ENCODE measurements at regions of chr5 and their contacts with region 1.

Region 1: DNA sequence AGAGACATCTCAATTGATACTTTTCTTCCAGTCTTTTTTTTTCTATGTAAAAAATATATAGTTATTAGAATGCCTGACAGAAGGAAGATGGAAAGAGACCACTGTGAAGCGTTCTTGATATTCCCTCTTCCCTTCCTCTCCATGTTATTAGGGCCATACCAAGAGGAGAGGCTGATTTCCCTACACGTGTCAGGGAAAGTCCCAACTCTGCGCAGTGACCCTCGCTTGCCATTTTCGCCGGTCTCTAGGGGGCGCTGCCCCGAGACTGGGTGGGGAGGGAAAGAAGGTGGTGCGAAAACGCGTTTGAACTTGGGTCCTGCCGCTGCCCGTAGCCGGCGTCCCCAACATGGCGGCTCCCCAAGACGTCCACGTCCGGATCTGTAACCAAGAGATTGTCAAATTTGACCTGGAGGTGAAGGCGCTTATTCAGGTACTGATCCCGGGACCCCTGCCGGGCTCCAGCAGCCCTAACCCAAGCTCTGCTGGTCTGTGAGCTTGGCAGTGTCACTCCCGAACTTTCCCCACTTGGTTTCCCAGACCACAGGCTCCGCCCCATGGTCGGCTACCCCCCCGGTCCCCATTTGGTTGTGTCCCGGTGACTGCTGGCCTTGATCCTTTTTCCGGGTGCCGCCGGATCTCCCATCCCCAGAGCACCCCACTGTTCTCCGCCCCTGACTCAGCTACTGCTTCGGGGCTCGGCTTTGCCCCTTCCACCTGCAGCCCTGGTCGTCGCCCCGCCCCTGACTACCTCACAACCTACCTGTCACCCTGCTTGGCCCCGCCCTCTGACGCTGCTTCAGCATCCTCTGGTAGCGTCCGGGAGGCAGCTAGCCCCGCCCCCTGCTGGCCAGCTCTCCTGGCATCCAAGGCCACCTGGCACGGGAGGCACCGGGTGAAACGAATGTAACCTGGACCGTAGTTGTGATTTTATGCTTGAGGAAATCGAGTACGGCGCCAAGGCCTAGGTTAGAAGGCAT is at the start of gene BNIP1:
- DNase-seq: peak; percentile 95
- ATAC-seq: peak; percentile 94
- total RNA-seq, gene BNIP1: 10.0 TPM

Region 2: DNA sequence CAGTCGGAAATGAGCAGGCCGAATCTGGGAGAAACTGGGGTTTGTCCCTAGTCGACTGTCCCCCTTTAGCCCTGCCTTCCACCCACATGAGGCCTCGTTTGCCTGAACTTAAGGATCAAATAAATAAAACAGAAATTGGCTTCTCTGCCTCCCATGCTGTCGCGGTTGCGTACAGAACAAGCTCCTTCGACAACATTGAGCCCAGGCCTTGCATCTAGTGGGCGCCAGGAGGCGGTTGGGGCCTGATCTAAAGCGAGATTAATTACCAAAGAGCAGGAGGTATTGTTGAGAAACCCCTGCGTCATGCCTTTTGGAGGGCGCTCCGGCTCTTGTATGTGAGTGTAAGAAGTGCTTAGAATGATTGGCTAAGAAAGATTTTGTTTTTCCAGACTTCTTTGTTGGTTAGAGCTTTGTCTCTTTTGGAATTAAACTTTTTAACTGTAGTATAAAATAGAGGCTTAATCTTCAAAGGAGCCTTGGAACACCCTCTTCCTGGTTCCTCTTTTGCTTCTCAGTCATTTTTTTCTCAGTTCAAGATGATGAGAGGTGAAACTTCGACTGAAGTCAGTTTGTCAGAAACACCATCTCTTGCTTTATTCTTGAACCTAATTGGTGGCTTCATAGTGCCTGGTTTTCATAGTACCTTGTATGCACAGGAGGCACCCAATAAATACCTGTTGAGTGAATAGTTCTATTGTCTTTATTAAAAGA is 160.1 kb before region 1 on chr5:
- intact Hi-C with region 1: loop called (anchors 10 kb)
- DNase-seq: peak; percentile 88
- ATAC-seq: peak; percentile 50

Region 3: DNA sequence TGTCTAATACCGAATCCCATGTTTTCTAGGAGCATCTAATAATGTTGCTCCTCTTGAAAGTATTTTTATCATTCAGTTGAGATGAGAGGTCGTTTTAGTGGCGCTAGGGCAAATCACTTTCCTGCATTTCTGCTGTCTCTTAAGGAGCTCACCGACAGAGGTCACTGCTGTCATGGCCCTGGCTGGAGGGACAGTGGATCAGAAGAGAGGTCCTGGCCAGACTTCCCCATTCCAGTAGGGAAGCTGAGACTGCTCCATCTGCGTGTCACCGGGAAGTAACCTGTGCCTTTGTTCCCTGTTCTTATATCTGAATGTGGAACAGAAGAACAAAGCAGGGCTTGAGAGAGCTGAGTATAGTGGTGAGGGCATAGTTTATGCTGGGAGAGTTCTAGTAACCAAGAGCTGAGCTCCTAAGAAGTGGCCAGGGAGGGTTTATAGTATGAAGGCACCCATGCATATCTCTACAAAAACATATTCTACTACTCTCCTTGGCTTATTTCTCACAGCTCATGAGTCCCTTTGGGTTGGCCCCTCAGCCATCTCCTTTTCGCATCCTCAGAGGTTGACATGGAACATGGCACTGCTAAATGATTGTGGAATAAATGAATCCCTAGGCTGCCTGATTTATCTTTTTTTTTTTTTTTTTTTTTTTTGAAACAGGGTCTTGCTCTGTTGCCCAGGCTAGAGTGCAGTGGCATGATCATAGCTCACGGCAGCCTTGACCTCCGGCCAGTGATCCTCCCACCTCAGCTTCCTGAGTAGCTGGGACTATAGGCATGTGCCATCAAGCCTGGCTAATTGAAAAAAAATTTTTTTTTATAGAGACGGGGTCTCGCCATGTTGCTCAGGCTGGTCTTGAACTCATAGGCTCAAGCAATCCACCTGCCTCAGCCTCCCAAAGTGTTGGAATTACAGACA is 133.7 kb before region 1 on chr5:
- intact Hi-C with region 1: loop called (anchors 2 kb)
- DNase-seq: no peak
- ATAC-seq: peak; percentile 93

Region 4: GRCh38 chr5:173245319-173246134 is 101.0 kb after region 1 on chr5:
- intact Hi-C with region 1: no loop called
- DNase-seq: no peak
- ATAC-seq: peak; percentile 55

Region 5: GRCh38 chr5:174520420-174521380 is 1376.2 kb after region 1 on chr5:
- intact Hi-C with region 1: no loop called
- DNase-seq: no peak
- ATAC-seq: no peak